Ascending aorta (tissue), 2 donors: ENCODE measurements at regions of chrX and their contacts with region 1.

Region 1: GRCh38 chrX:39907964-39908616 is 189.7 kb downstream of the BCOR start:
- DNase-seq: peak; percentile 38 to 90
- H3K4me3 ChIP-seq: peak overlapping the region in 1 of 2 donors; percentile 47
- H3K27ac ChIP-seq: peak overlapping the region; percentile 48 to 72
- H3K4me1 ChIP-seq: peaks cover 4 to 15% of the 10 kb centered on the region in 2 donors
- H3K27me3 ChIP-seq: no peaks in the 10 kb centered on the region
- CTCF ChIP-seq: no peak

Region 2: DNA sequence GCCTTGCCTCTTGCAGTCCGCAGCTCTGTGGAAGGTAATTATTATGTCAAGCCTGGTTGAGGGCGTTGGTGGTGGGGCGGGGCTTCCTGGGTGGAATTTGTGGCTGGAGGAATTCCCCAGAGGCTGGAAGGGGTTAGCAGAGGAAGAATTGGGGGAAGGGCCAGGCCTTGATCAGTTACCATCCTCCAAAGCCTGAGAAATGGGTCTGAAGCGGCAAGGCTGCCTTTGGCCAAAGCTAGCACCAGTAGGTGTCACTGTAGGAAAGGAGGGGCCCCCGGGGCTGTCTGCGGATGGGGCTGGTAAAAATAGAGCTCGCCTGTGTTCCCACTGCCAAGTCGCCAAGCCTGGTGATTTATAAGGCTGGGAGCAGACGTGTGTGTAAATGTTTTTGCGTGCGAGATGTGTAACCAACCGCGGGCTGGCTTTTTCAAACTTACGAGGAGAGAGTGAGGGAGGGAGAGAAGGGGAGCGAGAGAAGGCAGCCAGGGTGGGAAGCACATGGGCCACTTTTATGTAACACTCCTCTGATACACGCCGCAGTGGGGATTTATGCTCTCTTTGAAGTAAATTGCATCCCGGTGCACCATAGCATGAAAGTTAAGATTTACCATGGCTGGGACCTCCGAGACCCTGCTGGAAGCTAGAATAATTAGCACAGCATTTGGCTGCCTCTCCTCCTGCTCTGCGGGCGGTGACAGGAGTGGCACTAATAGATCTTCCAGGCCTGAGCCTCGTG is 177.3 kb before region 1 on chrX:
- intact Hi-C with region 1: loop called (anchors 5 kb)
- DNase-seq: peak; percentile 50 to 90
- H3K4me3 ChIP-seq: no peak overlapping the region
- H3K27ac ChIP-seq: peak overlapping the region; percentile 45 to 69
- H3K4me1 ChIP-seq: peaks cover 5 to 12% of the 10 kb centered on the region in 2 donors
- H3K27me3 ChIP-seq: no peaks in the 10 kb centered on the region
- CTCF ChIP-seq: peak; percentile 27 to 68 (median 56)

Region 3: GRCh38 chrX:39755143-39756032 is 152.7 kb before region 1 on chrX:
- intact Hi-C with region 1: loop called (anchors 5 kb)
- DNase-seq: peak; percentile 74 to 95
- H3K4me3 ChIP-seq: no peak overlapping the region
- H3K27ac ChIP-seq: peak overlapping the region; percentile 87 to 91
- H3K4me1 ChIP-seq: peaks cover 3 to 21% of the 10 kb centered on the region in 2 donors
- H3K27me3 ChIP-seq: no peaks in the 10 kb centered on the region
- CTCF ChIP-seq: no peak

Region 4: DNA sequence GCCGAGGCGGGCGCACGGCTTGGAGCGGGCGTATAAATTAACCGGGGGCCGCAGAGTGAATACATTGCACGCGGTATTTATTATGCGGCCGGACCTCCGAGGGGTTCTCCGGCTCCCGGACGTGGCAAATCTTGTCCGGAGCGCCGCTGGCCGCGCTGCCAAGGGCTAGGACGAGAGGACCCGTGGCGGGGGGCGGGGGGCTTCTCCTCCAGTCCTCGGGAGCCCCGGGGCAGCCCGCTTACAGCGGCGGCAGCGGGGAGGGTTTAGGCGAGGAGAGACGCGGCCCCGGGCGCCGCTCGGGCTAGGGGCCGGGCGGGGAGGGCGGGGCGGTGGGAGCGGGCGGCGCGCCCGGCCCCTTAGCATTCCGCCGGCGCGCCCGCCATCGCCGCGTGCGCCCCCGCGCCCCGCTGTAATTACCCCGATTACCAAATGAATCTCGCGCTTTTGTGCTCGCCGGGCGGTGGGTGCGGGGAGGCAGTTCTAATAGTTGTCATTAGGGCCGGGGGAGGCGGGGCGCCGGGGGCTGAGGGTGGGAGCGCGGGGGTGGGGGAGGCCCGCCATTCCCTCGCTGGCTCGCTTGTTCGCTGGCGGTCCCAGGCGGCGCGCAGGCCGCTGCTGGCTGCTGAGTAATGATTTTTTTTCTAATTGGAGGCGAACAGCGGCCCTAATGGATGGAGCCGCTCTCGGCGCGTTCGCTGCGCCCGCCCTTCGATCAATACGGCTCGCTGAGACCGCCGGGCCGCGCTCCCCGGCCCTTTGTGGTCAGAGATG is 87.0 kb before region 1 on chrX:
- intact Hi-C with region 1: loop called (anchors 5 kb)
- DNase-seq: no peak
- H3K4me3 ChIP-seq: peak overlapping the region; percentile 45 to 68
- H3K27ac ChIP-seq: peak overlapping the region in 1 of 2 donors; percentile 59
- H3K4me1 ChIP-seq: peaks cover 0 to 13% of the 10 kb centered on the region in 2 donors
- H3K27me3 ChIP-seq: no peaks in the 10 kb centered on the region
- CTCF ChIP-seq: no peak

Region 5: GRCh38 chrX:39848900-39849299 is 59.2 kb before region 1 on chrX:
- intact Hi-C with region 1: loop called (anchors 10 kb)
- DNase-seq: no peak
- H3K4me3 ChIP-seq: no peak overlapping the region
- H3K27ac ChIP-seq: no peak overlapping the region
- H3K4me1 ChIP-seq: no peaks in the 10 kb centered on the region
- H3K27me3 ChIP-seq: peaks cover 7% of the 10 kb centered on the region
- CTCF ChIP-seq: no peak

Region 6: DNA sequence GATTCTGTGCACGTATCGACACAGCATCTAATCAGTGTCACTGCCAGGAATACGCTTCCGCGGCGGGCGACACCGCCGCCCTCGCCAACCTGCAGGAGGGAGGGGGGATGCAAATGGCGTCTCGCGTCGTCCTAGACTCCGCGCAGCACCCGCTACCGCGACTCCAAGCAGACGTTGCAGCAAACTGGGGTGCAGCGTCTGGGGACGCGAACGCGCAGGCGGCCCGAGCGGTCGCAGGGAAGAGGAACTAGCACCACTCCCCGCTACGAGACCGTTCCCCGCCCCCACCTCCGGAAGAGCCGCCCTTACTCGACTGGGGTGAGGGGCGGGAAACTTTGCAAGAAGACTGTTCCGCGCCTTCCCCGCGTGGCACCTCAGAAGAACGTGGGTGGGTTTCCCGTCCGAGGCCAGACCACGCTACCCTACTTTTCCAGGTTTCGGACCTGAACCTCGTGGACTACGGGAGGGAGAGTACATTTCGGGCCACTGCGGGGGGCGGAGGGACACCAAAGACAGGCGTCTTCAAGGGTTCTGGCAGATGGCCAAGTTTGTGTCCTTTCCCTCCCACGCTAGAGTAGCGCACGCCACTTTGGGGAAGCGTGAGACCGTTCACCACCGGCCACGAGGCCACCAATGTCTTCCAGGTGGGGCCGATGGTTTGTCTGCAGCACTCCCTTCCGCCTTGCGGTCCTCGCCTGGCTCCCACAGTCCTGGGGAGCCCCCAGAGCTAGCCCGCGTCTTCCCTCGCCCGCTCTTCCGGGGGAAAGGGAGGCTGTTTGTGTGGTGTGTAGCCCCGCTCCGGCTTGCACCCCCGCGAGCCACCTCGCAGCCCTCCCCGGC is 267.6 kb after region 1 on chrX:
- intact Hi-C with region 1: loop called (anchors 5 kb)
- DNase-seq: peak in 1 of 2 donors; percentile 86
- H3K4me3 ChIP-seq: peak overlapping the region; percentile 59 to 75
- H3K27ac ChIP-seq: peak overlapping the region; percentile 89 to 93
- H3K4me1 ChIP-seq: peaks cover 3 to 14% of the 10 kb centered on the region in 2 donors
- H3K27me3 ChIP-seq: no peaks in the 10 kb centered on the region
- CTCF ChIP-seq: no peak